ENCODE measurements at regions of chr2 and their contacts with region 1.

Region 1: DNA sequence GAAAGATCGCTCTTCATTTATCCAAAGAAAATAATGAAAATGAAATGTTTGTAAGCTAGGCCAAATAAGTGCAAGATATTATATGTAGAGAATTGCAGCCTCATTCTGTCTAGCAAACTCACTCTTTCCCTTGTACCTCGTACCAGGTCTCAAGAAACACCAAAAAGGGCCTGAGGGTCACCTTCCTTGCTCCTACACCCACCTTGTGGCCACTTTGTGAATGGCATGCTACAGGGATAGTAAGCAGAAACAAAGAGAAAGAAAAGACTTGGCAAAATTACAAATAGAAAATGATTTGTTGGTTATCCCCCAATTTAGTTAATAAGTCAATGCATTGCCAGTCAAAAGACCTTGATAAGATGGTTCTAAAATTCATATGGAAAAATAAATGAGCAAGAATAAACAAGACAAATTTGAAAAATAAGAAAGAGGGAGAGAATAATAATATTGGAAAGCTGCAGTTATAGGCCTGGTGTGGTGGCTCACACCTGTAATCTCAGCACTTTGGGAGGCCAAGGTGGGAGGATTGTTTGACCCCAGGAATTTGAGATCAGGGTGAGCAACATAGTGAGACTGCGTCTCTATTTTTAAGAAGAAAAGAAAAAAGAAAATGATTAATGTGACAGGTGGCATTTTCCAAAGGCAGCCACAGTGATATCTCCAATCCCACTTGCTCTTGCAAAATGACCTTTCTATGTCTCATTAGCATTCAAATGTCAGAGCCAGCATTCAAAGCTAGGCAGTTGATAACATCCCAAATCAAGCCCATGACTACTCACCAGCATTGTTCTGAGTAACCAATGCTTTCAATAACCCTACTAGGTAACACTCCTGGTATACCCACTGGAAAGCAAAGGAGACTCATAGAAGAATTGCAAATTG is 38.8 kb upstream of the BMP10 start:
- DNase-seq: peak; percentile 92
- H3K4me3 Mint-ChIP-seq: no peak overlapping the region
- H3K27ac Mint-ChIP-seq: peak overlapping the region; percentile 68
- H3K4me1 Mint-ChIP-seq: peaks cover 34% of the 10 kb centered on the region
- H3K27me3 Mint-ChIP-seq: no peaks in the 10 kb centered on the region

Region 2: GRCh38 chr2:68062680-68063387 is 847.2 kb before region 1 on chr2 and contains the start of gene C1D:
- CTCF ChIA-PET with region 1: no interaction called
- intact Hi-C with region 1: loop called (anchors 2 kb)
- DNase-seq: peak; percentile 96
- H3K4me3 Mint-ChIP-seq: peak within 1 kb of the TSS; percentile 89
- H3K27ac Mint-ChIP-seq: peak within 1 kb of the TSS; percentile 93
- H3K4me1 Mint-ChIP-seq: peaks cover 33% of the 10 kb centered on the region
- H3K27me3 Mint-ChIP-seq: no peaks in the 10 kb centered on the region
- total RNA-seq, gene C1D: 19.0 to 21.4 TPM

Region 3: DNA sequence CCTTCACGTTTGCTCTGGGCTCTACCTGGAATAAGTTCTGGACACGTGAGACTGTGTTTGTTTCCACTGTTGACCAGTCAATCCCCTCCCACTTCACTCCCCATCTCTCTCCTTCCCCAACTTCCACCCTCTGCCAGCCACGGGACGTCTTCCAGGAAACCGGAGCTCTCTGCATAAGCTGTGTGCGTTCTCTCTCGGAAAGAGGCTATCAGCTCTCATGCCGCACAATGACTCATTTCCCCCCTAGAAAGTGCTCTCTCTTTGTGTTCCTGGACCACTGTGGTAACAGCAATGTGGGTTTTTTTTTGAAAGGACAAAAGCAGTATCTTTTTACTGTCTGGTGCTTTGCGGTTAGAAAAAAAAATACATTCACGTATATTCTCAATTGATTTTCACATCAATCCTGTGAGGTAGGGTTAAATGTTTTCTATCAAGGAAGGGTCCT is 256.5 kb before region 1 on chr2:
- CTCF ChIA-PET with region 1: no interaction called
- intact Hi-C with region 1: loop called (anchors 2 kb)
- DNase-seq: peak; percentile 78
- H3K4me3 Mint-ChIP-seq: peak overlapping the region; percentile 0
- H3K27ac Mint-ChIP-seq: peak overlapping the region; percentile 63
- H3K4me1 Mint-ChIP-seq: peaks cover 43% of the 10 kb centered on the region
- H3K27me3 Mint-ChIP-seq: peaks cover 18% of the 10 kb centered on the region

Region 4: DNA sequence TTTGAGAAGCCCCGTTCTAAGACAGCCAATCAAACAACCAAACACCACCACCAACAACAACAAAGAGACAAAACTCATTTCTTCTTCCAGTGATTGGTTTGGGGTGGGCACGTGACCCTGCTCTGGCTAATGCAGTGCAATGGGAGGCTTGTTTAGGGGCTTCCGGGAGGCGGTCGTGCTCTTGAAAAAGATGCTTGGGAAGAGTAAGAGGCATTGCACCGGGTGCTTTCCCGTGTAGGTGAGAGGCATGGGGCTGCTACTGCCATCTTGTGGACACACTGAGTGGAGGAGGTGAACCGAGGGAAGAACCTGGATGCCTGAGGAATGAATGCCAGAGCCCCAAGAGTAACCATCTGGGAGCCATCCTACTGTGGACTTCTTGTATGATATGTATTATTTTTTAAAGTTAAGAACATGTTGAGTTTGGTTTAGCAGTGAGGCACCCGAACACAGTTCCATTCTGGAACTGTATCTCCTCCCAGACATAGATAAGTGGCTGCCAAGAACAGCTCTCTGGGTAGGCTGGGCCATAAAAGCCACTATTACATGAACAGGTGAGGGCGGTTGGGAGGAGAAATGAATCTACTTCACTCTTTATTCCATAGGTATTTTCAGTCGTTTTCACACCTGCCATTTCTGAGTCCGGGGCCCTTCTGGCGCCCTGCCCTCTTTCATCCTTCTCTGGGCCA is 194.5 kb before region 1 on chr2:
- CTCF ChIA-PET with region 1: interaction called, 61 read pairs
- intact Hi-C with region 1: loop called (anchors 1 kb)
- DNase-seq: peak; percentile 72
- H3K4me3 Mint-ChIP-seq: no peak overlapping the region
- H3K27ac Mint-ChIP-seq: peak overlapping the region; percentile 83
- H3K4me1 Mint-ChIP-seq: peaks cover 73% of the 10 kb centered on the region
- H3K27me3 Mint-ChIP-seq: no peaks in the 10 kb centered on the region

Region 5: GRCh38 chr2:68742626-68743415 is 167.2 kb before region 1 on chr2:
- CTCF ChIA-PET with region 1: interaction called, 10 read pairs
- intact Hi-C with region 1: loop called (anchors 2 kb)
- DNase-seq: peak; percentile 45
- H3K4me3 Mint-ChIP-seq: no peak overlapping the region
- H3K27ac Mint-ChIP-seq: peak overlapping the region; percentile 91
- H3K4me1 Mint-ChIP-seq: peaks cover 93% of the 10 kb centered on the region
- H3K27me3 Mint-ChIP-seq: no peaks in the 10 kb centered on the region

Region 6: DNA sequence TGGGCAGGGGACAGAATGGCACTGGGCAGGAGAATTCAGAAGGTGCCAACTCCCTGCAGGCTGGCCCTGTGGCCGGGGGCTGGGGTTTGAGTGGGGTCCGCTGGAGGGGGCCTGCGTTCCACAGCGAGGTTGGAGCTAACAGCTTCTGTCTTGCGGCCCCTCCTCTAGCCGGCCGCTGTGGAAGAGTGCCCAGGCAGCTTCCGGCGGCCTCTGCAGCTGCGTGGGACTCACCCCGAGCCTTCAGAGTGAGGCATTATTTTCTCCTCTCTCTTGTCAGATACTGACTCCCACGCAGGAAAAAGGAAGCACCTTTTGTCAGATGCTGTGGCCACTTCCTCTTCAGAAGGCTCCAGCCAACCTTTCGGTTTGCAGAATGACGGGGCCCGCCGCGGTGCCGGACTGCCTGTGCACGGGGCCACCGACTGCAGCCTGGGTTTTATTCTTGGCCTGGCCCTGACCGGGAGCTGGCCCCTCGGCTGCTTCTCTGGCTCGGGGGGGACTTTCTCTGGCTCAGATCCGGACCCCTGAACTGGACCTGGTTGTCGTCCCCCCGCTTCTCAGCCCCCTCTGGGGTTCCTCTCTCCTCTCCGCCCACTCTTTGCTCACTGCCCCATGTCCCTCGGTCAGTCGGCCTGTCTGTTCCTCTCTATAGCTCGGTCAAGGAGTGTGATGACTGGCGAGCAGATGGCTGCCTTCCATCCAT is 135.3 kb before region 1 on chr2:
- CTCF ChIA-PET with region 1: interaction called, 4 read pairs
- intact Hi-C with region 1: loop called (anchors 1 kb)
- DNase-seq: peak; percentile 76
- H3K4me3 Mint-ChIP-seq: peak overlapping the region; percentile 68
- H3K27ac Mint-ChIP-seq: peak overlapping the region; percentile 87
- H3K4me1 Mint-ChIP-seq: peaks cover 83% of the 10 kb centered on the region
- H3K27me3 Mint-ChIP-seq: no peaks in the 10 kb centered on the region

Region 7: DNA sequence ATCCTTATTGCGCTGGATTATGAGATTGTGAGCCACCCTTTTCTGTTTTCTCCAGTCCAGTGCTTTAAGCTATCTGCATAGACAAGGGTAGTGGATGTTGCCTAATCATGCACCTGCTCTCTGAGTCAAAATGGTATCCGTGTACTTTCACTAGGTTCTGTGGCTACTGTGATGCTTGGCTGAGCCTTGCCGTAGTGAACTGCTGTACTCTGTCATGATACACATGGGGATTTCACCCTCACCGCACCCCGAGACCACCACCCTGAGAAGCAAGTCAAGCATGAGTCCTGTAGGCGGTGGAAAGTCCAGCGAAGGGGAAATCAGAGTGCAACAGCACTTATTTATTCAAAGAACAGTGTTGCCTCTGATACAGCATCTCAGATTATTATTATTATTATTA is 120.4 kb before region 1 on chr2:
- CTCF ChIA-PET with region 1: no interaction called
- intact Hi-C with region 1: no loop called
- DNase-seq: peak; percentile 40
- H3K4me3 Mint-ChIP-seq: no peak overlapping the region
- H3K27ac Mint-ChIP-seq: peak overlapping the region; percentile 61
- H3K4me1 Mint-ChIP-seq: peaks cover 40% of the 10 kb centered on the region
- H3K27me3 Mint-ChIP-seq: no peaks in the 10 kb centered on the region

Region 8: GRCh38 chr2:68857855-68858456 is 52.1 kb before region 1 on chr2:
- CTCF ChIA-PET with region 1: interaction called, 5 read pairs
- intact Hi-C with region 1: loop called (anchors 5 kb)
- DNase-seq: peak; percentile 19
- H3K4me3 Mint-ChIP-seq: no peak overlapping the region
- H3K27ac Mint-ChIP-seq: peak overlapping the region; percentile 50
- H3K4me1 Mint-ChIP-seq: peaks cover 9% of the 10 kb centered on the region
- H3K27me3 Mint-ChIP-seq: no peaks in the 10 kb centered on the region

Region 9: DNA sequence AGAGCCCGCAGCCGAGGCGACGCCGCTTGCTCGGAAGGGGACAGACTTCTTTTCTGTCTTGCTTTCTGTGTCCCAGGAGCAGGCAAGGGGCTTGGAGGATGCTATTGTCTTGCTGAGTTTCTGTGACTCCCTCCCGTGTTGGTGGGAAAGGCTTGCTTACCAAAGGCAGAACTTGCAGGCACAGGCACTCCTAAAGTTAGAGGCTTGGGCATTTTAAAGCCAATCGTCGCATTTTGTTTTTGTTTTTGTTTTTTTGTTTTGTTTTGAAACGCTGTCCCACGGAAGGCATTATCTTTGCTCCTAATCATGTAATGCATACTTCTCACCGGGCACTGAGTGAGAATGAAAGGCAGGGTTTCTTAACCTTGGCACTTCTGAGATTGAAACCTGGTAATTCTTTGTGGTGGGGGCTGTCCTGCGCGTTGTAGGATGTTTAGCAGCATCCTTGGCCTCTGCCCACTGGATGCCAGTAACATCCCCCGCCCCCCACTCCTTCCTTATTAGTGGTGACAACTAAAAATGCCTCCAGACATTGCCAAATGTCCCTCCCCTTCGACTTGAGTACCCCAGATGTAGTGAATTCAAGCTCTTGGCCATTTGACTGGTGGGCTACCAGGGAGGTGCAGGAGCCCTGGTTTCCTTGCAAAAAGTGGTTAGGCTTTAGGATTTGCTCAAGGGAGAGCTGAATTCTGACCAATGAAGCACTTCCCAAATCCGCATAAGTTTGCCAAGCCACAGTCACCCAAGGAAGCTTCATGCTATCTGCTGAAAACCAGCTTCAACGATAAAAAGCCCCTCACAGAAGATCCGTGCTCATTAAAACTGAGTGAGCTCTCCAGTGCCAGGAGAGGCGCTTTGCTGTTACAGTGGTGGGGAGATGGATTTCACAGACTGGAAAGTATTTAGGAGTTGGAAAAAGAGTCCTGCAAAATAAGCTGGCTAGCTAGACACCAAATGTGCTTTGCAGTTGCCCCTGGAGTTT is 104.1 kb after region 1 on chr2:
- CTCF ChIA-PET with region 1: no interaction called
- intact Hi-C with region 1: no loop called
- DNase-seq: peak; percentile 45
- H3K4me3 Mint-ChIP-seq: peak overlapping the region; percentile 68
- H3K27ac Mint-ChIP-seq: no peak overlapping the region
- H3K4me1 Mint-ChIP-seq: peaks cover 10% of the 10 kb centered on the region
- H3K27me3 Mint-ChIP-seq: peaks cover 39% of the 10 kb centered on the region

Region 10: GRCh38 chr2:70143314-70144287 is 1233.6 kb after region 1 on chr2:
- CTCF ChIA-PET with region 1: no interaction called
- intact Hi-C with region 1: no loop called
- DNase-seq: peak; percentile 63
- H3K4me3 Mint-ChIP-seq: peak overlapping the region; percentile 93
- H3K27ac Mint-ChIP-seq: peak overlapping the region; percentile 99
- H3K4me1 Mint-ChIP-seq: peaks cover 45% of the 10 kb centered on the region
- H3K27me3 Mint-ChIP-seq: no peaks in the 10 kb centered on the region

Measured in activated naive CD4-positive, alpha-beta T cell treated with anti-CD3 and anti-CD28 coated beads for 36 hours (primary cell).